ENCODE measurements at regions of chr19 and their contacts with region 1.

Region 1: GRCh38 chr19:14136509-14137281 is at the start of gene ASF1B:
- DNase-seq: peak; percentile 99
- ATAC-seq: peak; percentile 93 to 96 (median 95)
- H3K4me3 ChIP-seq: peak within 1 kb of the TSS; percentile 56 to 91 (median 74)
- H3K27ac ChIP-seq: peak within 1 kb of the TSS; percentile 83 to 97 (median 92)
- H3K4me1 ChIP-seq: peaks cover 3 to 49% (median 31%) of the 10 kb centered on the region in 9 donors
- H3K27me3 ChIP-seq: no peaks in the 10 kb centered on the region
- CTCF ChIP-seq: peak; percentile 60 to 98 (median 91)
- total RNA-seq, gene ASF1B: 0.17 to 5.6 (median 0.63) TPM

Region 2: GRCh38 chr19:14081325-14082093 is 55.2 kb before region 1 on chr19:
- intact Hi-C with region 1: loop called in 2 of 10 experiments (anchors 5 to 10 kb)
- DNase-seq: peak; percentile 99 to 100
- ATAC-seq: peak; percentile 89 to 97 (median 96)
- H3K4me3 ChIP-seq: peak overlapping the region; percentile 63 to 93 (median 82)
- H3K27ac ChIP-seq: peak overlapping the region; percentile 88 to 97 (median 94)
- H3K4me1 ChIP-seq: peaks cover 5 to 42% (median 19%) of the 10 kb centered on the region in 9 donors
- H3K27me3 ChIP-seq: no peaks in the 10 kb centered on the region
- CTCF ChIP-seq: no peak

Region 3: GRCh38 chr19:14091081-14091812 is 45.4 kb before region 1 on chr19:
- intact Hi-C with region 1: loop called in 2 of 10 experiments (anchors 5 to 10 kb)
- DNase-seq: peak in 1 of 2 donors; percentile 56
- ATAC-seq: peak; percentile 69 to 90 (median 82)
- H3K4me3 ChIP-seq: peak overlapping the region; percentile 73 to 95 (median 80)
- H3K27ac ChIP-seq: peak overlapping the region; percentile 88 to 99 (median 96)
- H3K4me1 ChIP-seq: peaks cover 0 to 19% (median 16%) of the 10 kb centered on the region in 9 donors
- H3K27me3 ChIP-seq: no peaks in the 10 kb centered on the region
- CTCF ChIP-seq: peak in 5 of 9 donors; percentile 19 to 54 (median 46)

Region 4: GRCh38 chr19:14117668-14118164 is 19.0 kb before region 1 on chr19 and contains the start of gene PRKACA:
- intact Hi-C with region 1: loop called in 1 of 10 experiments (anchors 1 kb)
- DNase-seq: peak; percentile 98 to 99
- ATAC-seq: peak; percentile 85 to 95 (median 90)
- H3K4me3 ChIP-seq: peak within 1 kb of the TSS; percentile 83 to 96 (median 90)
- H3K27ac ChIP-seq: peak within 1 kb of the TSS; percentile 86 to 100 (median 99)
- H3K4me1 ChIP-seq: peaks cover 38 to 66% (median 62%) of the 10 kb centered on the region in 9 donors
- H3K27me3 ChIP-seq: no peaks in the 10 kb centered on the region
- CTCF ChIP-seq: no peak
- total RNA-seq, gene PRKACA: 473 to 691 (median 518) TPM

Region 5: DNA sequence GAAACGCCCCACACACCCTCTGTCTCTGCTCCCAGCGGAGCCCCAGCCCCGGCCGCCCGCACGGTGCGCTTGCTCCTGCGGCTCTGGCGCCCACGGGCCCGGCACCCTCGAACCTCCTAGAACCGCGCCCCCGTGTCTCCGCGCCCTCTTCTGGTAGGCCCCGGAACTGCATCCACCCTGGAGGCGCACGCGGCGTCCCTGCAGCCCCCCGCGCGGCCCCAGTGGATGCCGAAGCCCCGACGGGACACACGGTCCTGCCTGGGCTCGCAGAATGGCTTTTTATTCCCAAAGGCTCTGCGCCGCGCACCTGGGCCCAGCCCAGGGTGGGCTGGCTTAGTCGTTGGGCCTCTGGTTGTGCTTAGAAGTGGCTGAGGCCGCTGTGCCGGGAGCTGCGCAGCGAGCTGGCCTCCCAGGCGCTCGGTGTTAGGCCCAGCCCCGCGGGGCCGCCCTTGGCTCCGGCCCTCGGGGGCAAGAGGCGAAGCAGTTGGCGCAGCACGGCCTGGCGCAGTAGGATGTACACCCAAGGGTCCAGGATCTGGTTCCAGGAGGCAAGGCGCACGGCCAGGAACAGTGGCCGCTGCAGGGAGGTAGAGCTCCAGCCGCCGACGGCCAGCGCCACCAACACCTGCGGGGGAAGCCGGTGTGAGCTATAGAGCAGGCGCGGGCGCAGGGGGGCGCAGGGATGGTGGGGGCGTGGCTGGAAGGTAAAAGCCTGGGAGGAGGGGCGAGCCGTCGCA is 335.7 kb after region 1 on chr19:
- intact Hi-C with region 1: loop called in 1 of 10 experiments (anchors 10 kb)
- DNase-seq: peak; percentile 67 to 83
- ATAC-seq: peak; percentile 53 to 68 (median 65)
- H3K4me3 ChIP-seq: peak overlapping the region in 8 of 10 donors; percentile 5 to 39 (median 24)
- H3K27ac ChIP-seq: no peak overlapping the region
- H3K4me1 ChIP-seq: peaks cover 11 to 47% (median 31%) of the 10 kb centered on the region in 9 donors
- H3K27me3 ChIP-seq: peaks cover 4 to 39% (median 31%) of the 10 kb centered on the region in 7 donors
- CTCF ChIP-seq: peak; percentile 96 to 99 (median 98)

Measured in heart right ventricle (tissue), 16 donors.